Lower leg skin (tissue), 4 donors: ENCODE measurements at regions of chr10 and their contacts with region 1.

Region 1: DNA sequence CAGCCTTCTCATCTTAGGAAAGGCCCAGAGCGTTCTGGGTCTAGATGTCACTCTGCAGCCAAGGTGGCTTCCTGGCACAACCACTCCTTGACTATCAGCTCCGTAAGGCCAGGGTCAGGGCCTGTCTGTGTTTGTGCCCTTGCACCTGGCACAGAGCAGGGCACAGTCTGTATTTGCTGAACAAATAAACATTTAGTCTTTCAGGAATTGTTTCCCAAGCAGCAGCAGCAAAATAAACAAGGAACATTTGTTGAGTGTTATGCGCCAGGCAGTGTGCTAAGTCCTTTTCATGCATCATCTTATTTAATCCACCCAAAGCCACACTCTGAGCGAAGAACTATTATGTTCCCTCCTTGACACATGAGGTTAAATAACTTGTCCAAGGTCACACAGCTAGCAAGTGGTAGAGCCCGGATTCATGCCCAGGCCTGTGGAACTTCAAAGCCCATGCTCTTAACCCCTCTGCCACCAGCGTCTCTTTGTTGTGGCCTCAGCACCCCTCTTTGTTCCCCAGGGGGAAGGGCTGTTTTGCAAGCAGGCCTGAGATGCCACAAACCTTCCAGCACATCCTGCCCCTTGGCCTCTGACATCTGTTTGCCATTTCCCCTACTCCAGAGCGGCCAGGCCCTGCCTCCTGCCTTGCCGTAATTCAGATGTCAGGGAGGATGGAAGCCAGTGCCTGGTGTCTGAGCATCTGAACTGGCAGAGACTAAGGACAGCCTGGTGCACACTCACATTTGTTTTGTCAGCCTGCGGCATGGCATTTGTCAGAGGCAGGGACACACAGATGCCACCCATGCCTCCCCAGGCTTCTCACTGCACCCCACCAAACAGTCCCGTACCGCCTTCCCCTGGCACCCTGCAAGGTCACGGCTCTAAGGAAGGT is 325.8 kb upstream of the ZMIZ1 start:
- DNase-seq: no peak
- H3K4me3 ChIP-seq: no peak overlapping the region
- CTCF ChIP-seq: no peak
- POLR2A ChIP-seq: no peak

Region 2: GRCh38 chr10:78706726-78707540 is 36.0 kb before region 1 on chr10:
- intact Hi-C with region 1: loop called (anchors 1 kb)
- DNase-seq: peak in 1 of 2 donors; percentile 0
- H3K4me3 ChIP-seq: no peak overlapping the region
- CTCF ChIP-seq: no peak
- POLR2A ChIP-seq: no peak

Region 3: DNA sequence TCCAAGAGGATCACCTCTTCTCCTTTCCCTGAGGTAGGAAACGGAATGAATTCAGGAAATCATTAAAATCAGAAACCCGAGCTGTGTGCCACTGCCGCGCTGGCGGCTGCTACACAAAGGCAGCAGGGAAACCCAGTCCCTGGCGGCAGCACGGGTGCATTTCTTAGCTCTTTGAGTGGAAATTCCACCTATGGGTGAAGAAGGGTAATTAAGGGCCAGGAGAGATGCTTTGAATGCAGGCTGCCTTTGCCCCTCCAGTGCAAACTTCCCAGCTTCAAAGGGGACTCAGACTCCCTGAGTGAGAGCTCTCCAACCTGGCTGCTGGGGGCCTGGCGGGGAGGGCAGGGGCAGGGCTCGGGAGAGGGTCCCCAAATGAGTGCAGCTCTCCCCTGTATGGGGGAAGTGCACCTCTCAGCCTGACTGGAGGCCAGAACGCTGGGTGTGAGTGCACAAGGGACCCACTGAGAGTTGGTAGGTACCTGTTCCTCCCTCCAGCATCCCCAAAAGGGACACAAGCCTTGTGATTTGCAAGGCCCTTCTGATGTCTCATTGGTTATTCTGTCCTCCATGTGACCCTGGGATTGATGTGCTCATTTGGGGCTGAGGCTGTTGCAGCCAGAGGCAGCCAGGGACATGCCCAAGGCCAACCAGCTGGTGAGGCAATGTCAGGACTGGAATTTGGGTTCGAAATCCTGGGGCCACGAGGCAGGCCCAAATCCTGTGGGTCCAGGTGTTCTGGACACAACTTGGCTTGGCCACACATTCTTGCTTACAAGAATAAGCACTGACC is 309.5 kb after region 1 on chr10:
- intact Hi-C with region 1: loop called (anchors 10 kb)
- DNase-seq: peak in 1 of 2 donors; percentile 66
- H3K4me3 ChIP-seq: no peak overlapping the region
- CTCF ChIP-seq: no peak
- POLR2A ChIP-seq: no peak